ENCODE measurements at regions of chrX and their contacts with region 1.

Region 1: DNA sequence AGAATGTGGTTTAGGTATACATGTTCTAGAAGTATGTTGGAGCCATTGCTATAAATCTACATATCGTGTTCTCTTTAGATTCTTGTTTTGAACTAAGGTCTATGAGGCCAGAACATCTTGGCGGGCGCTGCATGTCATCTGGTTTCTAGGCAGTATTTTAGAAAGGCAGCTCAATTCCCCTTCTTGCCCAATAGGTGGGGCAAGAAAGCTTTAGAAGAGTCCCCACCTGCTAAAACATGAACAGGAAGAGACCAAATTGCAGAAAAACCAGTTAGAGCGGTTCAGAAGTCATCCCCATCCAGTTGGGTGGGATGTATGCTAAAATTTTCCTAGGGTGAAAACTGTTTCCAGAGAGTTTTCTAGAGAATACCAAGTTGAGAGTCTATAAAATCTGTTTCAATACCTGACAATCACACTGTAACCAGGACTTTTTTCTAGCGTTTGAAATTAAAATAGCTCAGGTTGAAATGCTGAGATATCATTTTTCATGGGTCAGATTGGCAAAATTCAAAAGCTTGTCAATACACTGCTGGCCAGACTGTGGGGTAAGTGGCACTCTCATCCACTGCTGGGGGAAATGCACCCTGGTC is 17.5 kb upstream of the SH3KBP1 start:
- DNase-seq: peak; percentile 31
- ATAC-seq: peak; percentile 69
- H3K4me3 ChIP-seq: no peak overlapping the region
- H3K27ac ChIP-seq: no peak overlapping the region
- H3K4me1 ChIP-seq: no peaks in the 10 kb centered on the region
- H3K27me3 ChIP-seq: no peaks in the 10 kb centered on the region
- CTCF ChIP-seq: peak; percentile 71
- EP300 ChIP-seq: no peak
- POLR2A ChIP-seq: no peak
- RAD21 ChIP-seq: peak; percentile 35; the same call in 1 of the 2 replicates

Region 2: GRCh38 chrX:19990556-19991349 is 85.9 kb after region 1 on chrX and contains the start of gene BCLAF3:
- CTCF ChIA-PET with region 1: interaction called, 6 read pairs
- POLR2A ChIA-PET with region 1: no interaction called
- in situ Hi-C with region 1: loop called (anchors 10 kb)
- intact Hi-C with region 1: loop called (anchors 1 kb)
- DNase-seq: peak; percentile 79
- ATAC-seq: peak; percentile 93
- H3K4me3 ChIP-seq: peak within 1 kb of the TSS; percentile 55 to 77 (median 75)
- H3K27ac ChIP-seq: peak within 1 kb of the TSS; percentile 33
- H3K4me1 ChIP-seq: peaks cover 13% of the 10 kb centered on the region; the same call in 1 of the 2 replicates
- H3K27me3 ChIP-seq: no peaks in the 10 kb centered on the region
- CTCF ChIP-seq: peak; percentile 84
- EP300 ChIP-seq: no peak
- POLR2A ChIP-seq: no peak
- RAD21 ChIP-seq: peak; percentile 70
- total RNA-seq, gene BCLAF3: 2.3 and 2.7 TPM in 2 replicates